ENCODE measurements at regions of chr10 and their contacts with region 1.

Region 1: GRCh38 chr10:6144406-6145165 is 55.8 kb downstream of the RBM17 start:
- DNase-seq: peak; percentile 94
- ATAC-seq: peak; percentile 71
- H3K4me3 Mint-ChIP-seq: peak overlapping the region; percentile 81
- H3K27ac Mint-ChIP-seq: peak overlapping the region; percentile 90
- H3K4me1 Mint-ChIP-seq: peaks cover 79% of the 10 kb centered on the region
- H3K27me3 Mint-ChIP-seq: no peaks in the 10 kb centered on the region

Region 2: DNA sequence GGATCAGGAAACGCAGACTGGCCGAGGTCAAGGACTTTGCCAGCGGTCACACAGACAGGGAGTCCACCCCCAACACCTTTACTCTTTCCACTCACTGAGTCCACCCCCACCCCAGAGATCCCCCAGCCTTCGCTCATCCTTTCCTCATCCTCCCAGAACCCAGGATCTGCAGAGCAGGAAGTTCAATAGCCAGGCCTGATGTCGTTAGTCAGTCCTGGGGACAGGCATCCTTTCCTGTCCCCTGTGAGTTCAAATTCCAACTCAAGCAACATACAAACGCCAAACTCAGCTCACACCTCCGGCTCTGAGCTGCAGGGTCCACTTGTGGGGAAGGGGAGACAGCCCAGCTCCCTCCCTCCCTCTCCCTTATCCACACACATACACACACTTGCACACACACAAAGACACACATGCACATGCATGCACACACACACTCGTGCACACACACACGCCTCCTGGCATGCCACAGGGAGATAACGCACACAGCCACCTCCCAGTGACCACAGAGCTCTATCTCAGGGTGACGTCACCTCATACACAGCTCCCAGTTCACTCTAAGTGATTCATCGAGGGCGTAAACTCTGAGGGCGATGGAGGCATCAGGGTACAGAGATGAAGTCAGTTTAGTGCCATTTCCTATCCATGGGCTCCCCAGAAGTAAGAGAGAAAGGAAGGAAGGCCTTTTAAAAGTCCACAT is 595.9 kb before region 1 on chr10:
- CTCF ChIA-PET with region 1: interaction called, 3 read pairs
- POLR2A ChIA-PET with region 1: no interaction called
- intact Hi-C with region 1: loop called in 1 of 2 experiments (anchors 10 kb)
- DNase-seq: peak; percentile 85
- ATAC-seq: peak; percentile 95
- H3K4me3 Mint-ChIP-seq: no peak overlapping the region
- H3K27ac Mint-ChIP-seq: no peak overlapping the region
- H3K4me1 Mint-ChIP-seq: peaks cover 35% of the 10 kb centered on the region
- H3K27me3 Mint-ChIP-seq: peaks cover 2% of the 10 kb centered on the region

Region 3: GRCh38 chr10:5813287-5814109 is 331.1 kb before region 1 on chr10 and contains the start of gene GDI2:
- CTCF ChIA-PET with region 1: no interaction called
- POLR2A ChIA-PET with region 1: no interaction called
- intact Hi-C with region 1: loop called in 1 of 2 experiments (anchors 5 kb)
- DNase-seq: peak; percentile 98
- ATAC-seq: peak; percentile 94
- H3K4me3 Mint-ChIP-seq: peak within 1 kb of the TSS; percentile 92
- H3K27ac Mint-ChIP-seq: peak within 1 kb of the TSS; percentile 98
- H3K4me1 Mint-ChIP-seq: peaks cover 60% of the 10 kb centered on the region
- H3K27me3 Mint-ChIP-seq: no peaks in the 10 kb centered on the region
- total RNA-seq, gene GDI2: 276 to 290 TPM

Region 4: GRCh38 chr10:5977471-5978229 is 166.9 kb before region 1 on chr10 and contains the start of gene IL15RA:
- CTCF ChIA-PET with region 1: no interaction called
- POLR2A ChIA-PET with region 1: no interaction called
- intact Hi-C with region 1: loop called in 1 of 2 experiments (anchors 2 kb)
- DNase-seq: peak; percentile 95
- ATAC-seq: peak; percentile 72
- H3K4me3 Mint-ChIP-seq: peak within 1 kb of the TSS; percentile 94
- H3K27ac Mint-ChIP-seq: peak within 1 kb of the TSS; percentile 95
- H3K4me1 Mint-ChIP-seq: peaks cover 28% of the 10 kb centered on the region
- H3K27me3 Mint-ChIP-seq: no peaks in the 10 kb centered on the region
- total RNA-seq, gene IL15RA: 19.7 to 22.1 TPM

Region 5: GRCh38 chr10:5996696-5997095 is 147.9 kb before region 1 on chr10:
- CTCF ChIA-PET with region 1: no interaction called
- POLR2A ChIA-PET with region 1: no interaction called
- intact Hi-C with region 1: no loop called
- DNase-seq: no peak
- ATAC-seq: no peak
- H3K4me3 Mint-ChIP-seq: no peak overlapping the region
- H3K27ac Mint-ChIP-seq: no peak overlapping the region
- H3K4me1 Mint-ChIP-seq: peaks cover 9% of the 10 kb centered on the region
- H3K27me3 Mint-ChIP-seq: peaks cover 7% of the 10 kb centered on the region

Region 6: DNA sequence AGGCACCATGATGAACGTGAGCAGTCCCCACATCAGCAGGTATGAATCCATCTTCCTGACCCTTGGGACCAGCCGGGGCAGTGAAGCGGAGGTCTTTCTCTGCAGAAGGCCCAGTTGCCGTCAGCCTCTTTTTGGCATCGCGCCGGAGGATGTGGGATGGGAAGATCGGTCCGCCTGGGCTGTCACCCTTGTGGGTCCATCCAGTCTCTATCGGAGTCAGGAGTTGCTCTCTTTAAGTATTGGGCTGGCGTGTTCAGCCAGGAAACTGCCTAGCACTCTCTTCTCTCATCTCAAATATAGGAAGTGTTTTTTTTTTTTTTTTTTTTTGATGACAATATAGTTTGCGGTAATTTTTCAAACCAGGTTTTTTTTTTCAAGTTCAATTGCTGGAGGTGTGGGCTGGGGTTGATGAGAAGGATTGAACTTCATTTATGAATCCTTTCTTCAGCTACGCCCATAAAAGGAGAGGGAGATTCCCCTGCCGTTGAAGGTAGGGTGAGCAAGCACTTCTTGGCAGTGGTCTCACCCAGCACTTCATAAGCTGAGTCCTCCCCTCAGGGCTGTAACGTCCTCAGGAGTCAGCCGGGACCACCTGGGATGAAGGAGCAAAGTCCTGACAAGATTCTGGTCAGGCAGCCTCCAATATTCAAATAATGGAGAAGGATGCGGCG is 82.3 kb before region 1 on chr10 and contains the start of gene IL2RA:
- CTCF ChIA-PET with region 1: no interaction called
- POLR2A ChIA-PET with region 1: no interaction called
- intact Hi-C with region 1: loop called in 1 of 2 experiments (anchors 2 kb)
- DNase-seq: peak; percentile 87
- ATAC-seq: peak; percentile 79
- H3K4me3 Mint-ChIP-seq: peak within 1 kb of the TSS; percentile 91
- H3K27ac Mint-ChIP-seq: peak within 1 kb of the TSS; percentile 93
- H3K4me1 Mint-ChIP-seq: peaks cover 53% of the 10 kb centered on the region
- H3K27me3 Mint-ChIP-seq: peaks cover 3% of the 10 kb centered on the region
- total RNA-seq, gene IL2RA: 659 to 980 TPM

Region 7: GRCh38 chr10:6128591-6129251 is 15.9 kb before region 1 on chr10:
- CTCF ChIA-PET with region 1: interaction called, 3 read pairs
- POLR2A ChIA-PET with region 1: interaction called, 4 read pairs
- intact Hi-C with region 1: loop called in 1 of 2 experiments (anchors 1 kb)
- DNase-seq: no peak
- ATAC-seq: no peak
- H3K4me3 Mint-ChIP-seq: no peak overlapping the region
- H3K27ac Mint-ChIP-seq: peak overlapping the region; percentile 82
- H3K4me1 Mint-ChIP-seq: peaks cover 44% of the 10 kb centered on the region
- H3K27me3 Mint-ChIP-seq: no peaks in the 10 kb centered on the region

Region 8: GRCh38 chr10:6163364-6164270 is 19.0 kb after region 1 on chr10:
- CTCF ChIA-PET with region 1: interaction called, 5 read pairs
- POLR2A ChIA-PET with region 1: interaction called, 9 read pairs
- intact Hi-C with region 1: loop called (anchors 1 to 2 kb)
- DNase-seq: peak; percentile 94
- ATAC-seq: peak; percentile 92
- H3K4me3 Mint-ChIP-seq: peak overlapping the region; percentile 92
- H3K27ac Mint-ChIP-seq: peak overlapping the region; percentile 95
- H3K4me1 Mint-ChIP-seq: peaks cover 67% of the 10 kb centered on the region
- H3K27me3 Mint-ChIP-seq: no peaks in the 10 kb centered on the region

Measured in activated CD4-positive, alpha-beta T cell treated with anti-CD3 and anti-CD28 coated beads for 36 hours (primary cell).